ENCODE measurements at regions of chr3 and their contacts with region 1.

Region 1: GRCh38 chr3:59426821-59427565 is 377.2 kb upstream of the CFAP20DC start:
- DNase-seq: peak in 1 of 2 donors; percentile 29
- ATAC-seq: peak in 2 of 3 donors; percentile 44 to 65
- H3K4me3 ChIP-seq: no peak overlapping the region
- H3K4me3 Mint-ChIP-seq: peak overlapping the region; percentile 32
- H3K27ac ChIP-seq: no peak overlapping the region
- H3K27ac Mint-ChIP-seq: peak overlapping the region in 1 of 2 donors; percentile 74
- H3K4me1 ChIP-seq: peaks cover 34% of the 10 kb centered on the region
- H3K4me1 Mint-ChIP-seq: peaks cover 40 to 47% of the 10 kb centered on the region in 2 donors
- H3K27me3 ChIP-seq: no peaks in the 10 kb centered on the region
- H3K27me3 Mint-ChIP-seq: peaks cover 27 to 39% of the 10 kb centered on the region in 2 donors
- CTCF ChIP-seq: no peak

Region 2: GRCh38 chr3:59450946-59451763 is 24.2 kb after region 1 on chr3:
- intact Hi-C with region 1: loop called (anchors 2 kb)
- DNase-seq: peak; percentile 41 to 86
- ATAC-seq: peak; percentile 89 to 96 (median 93)
- H3K4me3 ChIP-seq: no peak overlapping the region
- H3K4me3 Mint-ChIP-seq: peak overlapping the region; percentile 81
- H3K27ac ChIP-seq: peak overlapping the region; percentile 73
- H3K27ac Mint-ChIP-seq: peak overlapping the region; percentile 88 to 95
- H3K4me1 ChIP-seq: peaks cover 30% of the 10 kb centered on the region
- H3K4me1 Mint-ChIP-seq: peaks cover 45 to 63% of the 10 kb centered on the region in 2 donors
- H3K27me3 ChIP-seq: no peaks in the 10 kb centered on the region
- H3K27me3 Mint-ChIP-seq: peaks cover 0 to 3% of the 10 kb centered on the region in 2 donors
- CTCF ChIP-seq: no peak

Region 3: GRCh38 chr3:60475096-60475495 is 1048.1 kb after region 1 on chr3:
- intact Hi-C with region 1: no loop called
- DNase-seq: no peak
- ATAC-seq: no peak
- H3K4me3 ChIP-seq: no peak overlapping the region
- H3K4me3 Mint-ChIP-seq: no peak overlapping the region
- H3K27ac ChIP-seq: no peak overlapping the region
- H3K27ac Mint-ChIP-seq: no peak overlapping the region
- H3K4me1 ChIP-seq: no peaks in the 10 kb centered on the region
- H3K4me1 Mint-ChIP-seq: no peaks in the 10 kb centered on the region
- H3K27me3 ChIP-seq: no peaks in the 10 kb centered on the region
- H3K27me3 Mint-ChIP-seq: peaks cover 0 to 3% of the 10 kb centered on the region in 2 donors
- CTCF ChIP-seq: no peak